K562 (cell line): ENCODE measurements at regions of chr2 and their contacts with region 1.

Region 1: DNA sequence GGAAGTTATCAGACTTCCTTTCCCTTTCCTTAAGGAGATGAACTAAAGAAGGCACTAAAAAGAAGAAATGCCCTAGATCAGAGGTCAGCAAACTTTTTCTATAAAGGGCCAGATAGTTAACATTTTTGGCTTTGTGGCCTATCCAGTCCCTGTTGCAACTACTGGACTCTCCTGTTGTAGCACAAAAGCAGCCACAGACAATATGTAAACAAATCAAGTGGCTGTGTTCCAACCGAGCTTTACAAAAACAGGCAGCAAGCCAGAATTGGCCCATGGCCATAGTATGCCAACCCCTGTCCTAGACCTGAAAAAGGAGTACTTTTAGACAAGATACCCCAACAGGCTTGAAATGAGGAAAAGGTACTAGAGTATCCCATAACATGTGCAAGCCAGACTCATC is 10.9 kb downstream of the NHEJ1 start:
- DNase-seq: no peak
- ATAC-seq: no peak
- H3K4me3 ChIP-seq: no peak overlapping the region
- H3K27ac ChIP-seq: no peak overlapping the region
- H3K4me1 ChIP-seq: no peaks in the 10 kb centered on the region
- H3K27me3 ChIP-seq: no peaks in the 10 kb centered on the region
- CTCF ChIP-seq: no peak
- EP300 ChIP-seq: no peak
- POLR2A ChIP-seq: no peak
- RAD21 ChIP-seq: no peak

Region 2: DNA sequence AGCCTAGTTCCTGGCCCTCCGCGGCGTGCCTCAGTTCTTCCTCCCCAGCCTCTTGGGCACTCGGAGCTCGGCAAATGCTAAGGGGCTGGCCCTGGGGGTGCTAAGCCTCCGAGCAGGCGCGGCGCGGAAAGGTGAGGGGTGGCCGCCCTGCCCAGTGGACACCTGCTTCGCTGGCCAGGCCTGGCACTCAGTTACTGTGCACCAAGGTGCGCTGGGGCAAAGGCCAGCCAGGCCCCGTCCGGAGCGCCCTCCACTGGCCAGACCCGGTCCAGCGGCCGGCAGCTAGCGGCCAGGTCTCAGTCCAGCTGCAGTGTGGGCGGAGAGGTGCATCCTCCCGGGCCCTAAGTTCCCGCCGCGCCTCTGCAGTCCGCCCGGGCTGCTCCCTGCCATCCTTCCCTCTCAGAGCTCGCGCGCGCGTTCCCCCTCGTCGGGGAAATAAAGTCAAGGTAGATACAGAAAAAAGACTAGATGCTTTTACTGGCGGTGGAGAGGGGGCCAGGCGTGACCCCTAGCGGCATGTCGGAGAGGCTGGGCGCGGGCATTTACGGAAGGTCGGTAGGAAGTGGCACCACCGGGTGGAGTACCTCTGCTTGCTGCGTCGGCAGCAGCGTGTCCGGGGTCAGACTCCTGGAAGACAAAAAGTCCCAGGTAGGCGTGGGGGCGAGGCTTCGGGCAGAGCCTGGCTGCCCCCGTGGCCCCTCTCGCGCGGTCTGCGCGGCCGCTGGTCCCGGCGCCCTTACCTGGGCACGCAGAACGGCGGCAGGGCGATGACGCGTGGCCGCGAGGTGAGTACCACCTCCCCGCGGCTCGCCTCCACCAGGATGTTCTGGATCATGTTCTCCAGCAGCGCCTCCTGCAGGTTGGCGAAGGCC is 147.0 kb before region 1 on chr2:
- CTCF ChIA-PET with region 1: no interaction called
- POLR2A ChIA-PET with region 1: no interaction called
- in situ Hi-C with region 1: no loop called
- intact Hi-C with region 1: no loop called
- DNase-seq: peak; percentile 74 to 83 (median 82)
- ATAC-seq: peak; percentile 95
- H3K4me3 ChIP-seq: no peak overlapping the region
- H3K27ac ChIP-seq: no peak overlapping the region
- H3K4me1 ChIP-seq: peaks cover 9 to 32% of the 10 kb centered on the region in 2 experiments
- H3K27me3 ChIP-seq: peaks cover 0 to 32% of the 10 kb centered on the region in 2 experiments; a peak in 2 of 5 replicates
- CTCF ChIP-seq: peak; percentile 59 to 90 (median 61); a peak in 5 of 6 replicates
- EP300 ChIP-seq: no peak
- POLR2A ChIP-seq: no peak
- RAD21 ChIP-seq: peak; percentile 21 to 54; a peak in 1 of 4 replicates

Region 3: GRCh38 chr2:219111375-219112061 is 38.1 kb before region 1 on chr2:
- CTCF ChIA-PET with region 1: no interaction called
- POLR2A ChIA-PET with region 1: no interaction called
- in situ Hi-C with region 1: loop called (anchors 5 kb)
- intact Hi-C with region 1: no loop called
- DNase-seq: no peak
- ATAC-seq: no peak
- H3K4me3 ChIP-seq: no peak overlapping the region
- H3K27ac ChIP-seq: no peak overlapping the region
- H3K4me1 ChIP-seq: no peaks in the 10 kb centered on the region
- H3K27me3 ChIP-seq: no peaks in the 10 kb centered on the region
- CTCF ChIP-seq: no peak
- EP300 ChIP-seq: no peak
- POLR2A ChIP-seq: no peak
- RAD21 ChIP-seq: no peak